Activated T-helper 2 cell treated with anti-CD3 and anti-CD28 coated beads, Interferon-gamma antibody, Interleukin-2, Interleukin-4, amounts not matched to agents 10 μg/mL and 5 μg/mL and 100 μg/mL, durations not matched to agents 14 hours and 24 hours and 36 hours (primary cell): ENCODE measurements at regions of chr19 and their contacts with region 1.

Region 1: GRCh38 chr19:4968462-4969291 is at the start of gene KDM4B:
- DNase-seq: peak; percentile 99
- H3K4me3 Mint-ChIP-seq: peak within 1 kb of the TSS; percentile 96
- H3K27ac Mint-ChIP-seq: peak within 1 kb of the TSS; percentile 91
- H3K4me1 Mint-ChIP-seq: peaks cover 38% of the 10 kb centered on the region
- H3K27me3 Mint-ChIP-seq: no peaks in the 10 kb centered on the region
- total RNA-seq, gene KDM4B: 51.7 and 54.3 TPM in 2 replicates

Region 2: DNA sequence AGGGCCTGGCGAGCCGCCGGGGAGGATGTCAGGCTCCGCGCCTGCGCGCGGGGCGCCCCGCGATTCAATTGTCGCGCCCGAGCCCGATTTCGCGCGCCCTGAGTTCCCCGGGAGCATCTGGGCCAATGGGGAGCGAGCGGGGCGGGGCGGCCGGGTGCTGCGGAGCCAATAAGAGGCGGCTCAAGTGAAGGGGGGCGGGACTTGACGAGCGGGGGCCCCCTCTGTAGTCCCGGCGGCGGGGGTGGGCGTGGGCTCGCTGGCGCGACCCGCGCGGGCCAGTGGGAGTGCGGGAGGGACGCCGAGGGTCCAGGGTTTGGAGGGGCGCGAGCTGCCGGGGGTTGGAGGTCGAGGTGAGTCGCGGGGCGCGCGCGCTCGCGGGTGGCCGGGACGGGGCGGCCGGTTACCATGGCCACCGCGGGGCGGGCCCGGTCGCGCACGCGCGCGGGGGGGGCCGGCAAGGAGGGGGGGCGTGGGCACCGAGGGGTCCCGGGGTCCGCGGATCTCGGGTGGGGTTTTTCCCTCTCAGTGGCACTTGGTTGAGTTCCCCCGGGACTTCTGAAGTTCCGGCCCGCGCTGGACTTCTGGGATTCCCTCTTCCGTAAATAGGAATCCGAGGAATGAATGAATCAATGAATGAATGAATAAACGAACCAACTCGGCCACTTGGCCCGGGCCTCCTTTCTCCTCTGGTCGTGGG is 58.6 kb before region 1 on chr19:
- intact Hi-C with region 1: loop called (anchors 1 kb)
- DNase-seq: peak; percentile 94
- H3K4me3 Mint-ChIP-seq: peak overlapping the region; percentile 88
- H3K27ac Mint-ChIP-seq: peak overlapping the region; percentile 84
- H3K4me1 Mint-ChIP-seq: peaks cover 39% of the 10 kb centered on the region
- H3K27me3 Mint-ChIP-seq: no peaks in the 10 kb centered on the region